CD4-positive, alpha-beta memory T cell (primary cell): ENCODE measurements at regions of chr21 and their contacts with region 1.

Region 1: GRCh38 chr21:33127154-33127893 is 57.4 kb downstream of the OLIG1 start:
- DNase-seq: peak; percentile 31 to 48 (median 41)
- H3K4me3 ChIP-seq: peak overlapping the region in 1 of 2 donors; percentile 20
- H3K4me3 Mint-ChIP-seq: peak overlapping the region in 7 of 8 donors; percentile 73 to 82 (median 75)
- H3K27ac ChIP-seq: no peak overlapping the region
- H3K27ac Mint-ChIP-seq: no peak overlapping the region
- H3K4me1 ChIP-seq: peaks cover 7% of the 10 kb centered on the region
- H3K4me1 Mint-ChIP-seq: peaks cover 4 to 7% (median 6%) of the 10 kb centered on the region in 4 donors
- H3K27me3 ChIP-seq: no peaks in the 10 kb centered on the region
- H3K27me3 Mint-ChIP-seq: peaks cover 12 to 25% of the 10 kb centered on the region in 2 donors

Region 2: GRCh38 chr21:32978341-32979270 is 148.7 kb before region 1 on chr21:
- CTCF ChIA-PET with region 1: no interaction called
- POLR2A ChIA-PET with region 1: no interaction called
- intact Hi-C with region 1: no loop called
- DNase-seq: no peak
- H3K4me3 ChIP-seq: no peak overlapping the region
- H3K4me3 Mint-ChIP-seq: no peak overlapping the region
- H3K27ac ChIP-seq: no peak overlapping the region
- H3K27ac Mint-ChIP-seq: no peak overlapping the region
- H3K4me1 ChIP-seq: no peaks in the 10 kb centered on the region
- H3K4me1 Mint-ChIP-seq: no peaks in the 10 kb centered on the region
- H3K27me3 ChIP-seq: no peaks in the 10 kb centered on the region
- H3K27me3 Mint-ChIP-seq: peaks cover 15 to 24% of the 10 kb centered on the region in 2 donors

Region 3: GRCh38 chr21:32994305-32994704 is 133.0 kb before region 1 on chr21:
- CTCF ChIA-PET with region 1: interaction called, 7 read pairs
- POLR2A ChIA-PET with region 1: no interaction called
- intact Hi-C with region 1: loop called (anchors 1 kb)
- DNase-seq: no peak
- H3K4me3 ChIP-seq: no peak overlapping the region
- H3K4me3 Mint-ChIP-seq: no peak overlapping the region
- H3K27ac ChIP-seq: no peak overlapping the region
- H3K27ac Mint-ChIP-seq: peak overlapping the region in 1 of 7 donors; percentile 19
- H3K4me1 ChIP-seq: no peaks in the 10 kb centered on the region
- H3K4me1 Mint-ChIP-seq: no peaks in the 10 kb centered on the region
- H3K27me3 ChIP-seq: no peaks in the 10 kb centered on the region
- H3K27me3 Mint-ChIP-seq: peaks cover 19 to 22% of the 10 kb centered on the region in 2 donors

Region 4: DNA sequence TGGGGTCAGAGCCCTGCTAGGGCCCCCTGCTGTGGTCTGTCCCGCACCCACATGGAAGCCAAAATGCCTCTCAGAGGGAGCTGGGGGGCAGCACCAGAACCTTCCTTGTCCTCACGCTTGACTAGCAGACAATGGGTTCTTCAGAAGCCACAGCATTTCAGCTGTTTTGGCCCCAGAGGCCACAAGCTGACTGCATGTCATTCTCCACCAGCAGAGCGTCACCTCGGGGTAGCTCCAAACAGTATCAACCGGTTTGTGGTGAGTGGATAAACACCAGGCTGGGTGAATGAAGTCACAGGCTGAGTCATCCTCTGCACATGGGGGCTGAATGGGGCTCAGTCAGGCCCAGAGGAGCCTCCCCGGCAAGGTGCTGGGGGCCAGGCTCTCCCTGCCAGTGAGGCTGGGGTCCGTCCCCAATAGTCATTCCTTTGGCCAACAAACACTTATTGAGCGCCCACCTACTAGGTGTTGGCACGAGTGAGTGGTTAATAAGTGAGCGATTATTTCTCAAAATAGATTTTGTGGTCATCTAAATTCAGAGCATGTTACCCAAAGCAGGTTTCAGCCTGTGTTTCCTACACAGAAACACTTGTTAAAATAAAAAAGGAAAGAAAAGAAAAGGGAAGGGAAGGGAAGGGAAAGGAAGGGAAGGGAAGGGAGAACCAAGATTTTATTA is 48.3 kb before region 1 on chr21:
- CTCF ChIA-PET with region 1: no interaction called
- POLR2A ChIA-PET with region 1: no interaction called
- intact Hi-C with region 1: no loop called
- DNase-seq: no peak
- H3K4me3 ChIP-seq: no peak overlapping the region
- H3K4me3 Mint-ChIP-seq: no peak overlapping the region
- H3K27ac ChIP-seq: no peak overlapping the region
- H3K27ac Mint-ChIP-seq: no peak overlapping the region
- H3K4me1 ChIP-seq: no peaks in the 10 kb centered on the region
- H3K4me1 Mint-ChIP-seq: peaks cover 0 to 5% (median 2%) of the 10 kb centered on the region in 4 donors
- H3K27me3 ChIP-seq: peaks cover 6% of the 10 kb centered on the region
- H3K27me3 Mint-ChIP-seq: peaks cover 12 to 22% of the 10 kb centered on the region in 2 donors

Region 5: DNA sequence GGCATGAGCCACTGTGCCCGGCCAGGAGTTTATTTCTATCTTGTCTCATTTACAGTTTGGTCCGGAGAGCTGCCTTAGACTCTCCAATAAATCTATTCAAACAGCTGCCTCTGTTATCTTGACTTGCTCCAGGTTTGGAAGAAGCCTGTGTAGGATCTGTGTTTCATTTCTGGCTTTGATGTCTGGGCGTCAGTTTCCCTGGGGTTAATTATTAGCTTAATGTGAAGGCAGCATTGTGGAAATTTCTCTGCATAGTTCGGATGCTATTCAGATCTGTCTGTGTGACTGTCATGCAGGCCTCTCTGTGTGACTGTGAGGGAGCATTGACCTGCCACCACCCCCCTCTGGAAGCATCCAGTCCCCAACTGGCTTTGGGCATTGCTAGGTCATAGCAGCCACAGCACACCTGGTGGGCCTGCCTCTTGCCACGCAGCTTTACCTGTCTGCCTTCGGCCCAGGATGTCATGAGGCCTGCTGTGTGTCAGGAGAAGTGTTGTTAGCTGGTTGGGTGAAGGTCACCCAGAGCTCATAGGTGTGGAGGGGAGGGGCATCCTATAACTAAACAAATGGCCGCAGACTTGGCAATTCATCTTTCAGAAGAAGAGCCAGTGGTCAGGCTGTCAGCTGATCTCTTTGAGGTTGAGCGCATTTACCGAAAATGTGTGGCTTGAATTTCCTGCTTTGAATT is 285.7 kb after region 1 on chr21:
- CTCF ChIA-PET with region 1: no interaction called
- POLR2A ChIA-PET with region 1: no interaction called
- intact Hi-C with region 1: no loop called
- DNase-seq: no peak
- H3K4me3 ChIP-seq: no peak overlapping the region
- H3K4me3 Mint-ChIP-seq: peak overlapping the region in 6 of 8 donors; percentile 15 to 58 (median 41)
- H3K27ac ChIP-seq: no peak overlapping the region
- H3K27ac Mint-ChIP-seq: peak overlapping the region; percentile 11 to 80 (median 42)
- H3K4me1 ChIP-seq: peaks cover 11% of the 10 kb centered on the region
- H3K4me1 Mint-ChIP-seq: peaks cover 18 to 48% (median 26%) of the 10 kb centered on the region in 4 donors
- H3K27me3 ChIP-seq: no peaks in the 10 kb centered on the region
- H3K27me3 Mint-ChIP-seq: no peaks in the 10 kb centered on the region